Left ventricle myocardium inferior (tissue), 1 donor: ENCODE measurements at regions of chr1 and their contacts with region 1.

Region 1: DNA sequence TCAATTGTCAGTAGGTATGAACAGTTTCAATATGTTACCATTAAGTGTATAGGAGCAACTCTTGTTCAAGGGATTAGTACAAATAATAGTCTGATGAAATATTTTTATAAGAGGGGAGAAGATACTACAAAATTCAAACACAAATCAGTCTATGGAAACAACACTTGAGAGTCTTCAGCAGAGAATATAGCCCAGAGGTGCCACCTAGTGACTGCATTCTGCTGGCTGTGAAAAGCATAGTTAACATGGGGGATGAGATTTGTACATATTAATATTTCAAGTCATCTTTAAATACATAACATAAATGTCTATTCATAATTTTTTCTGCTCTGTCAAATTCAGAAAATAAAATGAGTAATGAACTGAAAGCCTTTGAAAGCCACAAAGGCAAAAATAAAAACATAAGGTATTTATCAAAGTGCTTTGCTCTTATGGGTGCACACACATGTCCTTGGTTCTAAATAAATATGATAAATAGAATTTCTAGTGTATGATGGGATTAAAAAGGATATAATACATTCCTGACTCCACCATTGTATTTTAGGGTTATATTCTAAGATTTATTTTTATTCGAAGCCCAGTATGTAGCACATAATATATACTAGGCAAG is 440.9 kb upstream of the ZRANB2 start:
- DNase-seq: no peak
- H3K4me3 ChIP-seq: no peak overlapping the region
- H3K27ac ChIP-seq: no peak overlapping the region
- H3K4me1 ChIP-seq: no peaks in the 10 kb centered on the region
- H3K27me3 ChIP-seq: no peaks in the 10 kb centered on the region
- CTCF ChIP-seq: peak; percentile 75

Region 2: GRCh38 chr1:71196685-71197084 is 325.1 kb before region 1 on chr1:
- intact Hi-C with region 1: loop called (anchors 5 kb)
- DNase-seq: no peak
- H3K4me3 ChIP-seq: no peak overlapping the region
- H3K27ac ChIP-seq: no peak overlapping the region
- H3K4me1 ChIP-seq: peaks cover 6% of the 10 kb centered on the region
- H3K27me3 ChIP-seq: no peaks in the 10 kb centered on the region
- CTCF ChIP-seq: peak; percentile 61

Region 3: GRCh38 chr1:71490432-71490831 is 31.3 kb before region 1 on chr1:
- intact Hi-C with region 1: no loop called
- DNase-seq: no peak
- H3K4me3 ChIP-seq: no peak overlapping the region
- H3K27ac ChIP-seq: no peak overlapping the region
- H3K4me1 ChIP-seq: no peaks in the 10 kb centered on the region
- H3K27me3 ChIP-seq: no peaks in the 10 kb centered on the region
- CTCF ChIP-seq: no peak